A673 (cell line): ENCODE measurements at regions of chr7 and their contacts with region 1.

Region 1: DNA sequence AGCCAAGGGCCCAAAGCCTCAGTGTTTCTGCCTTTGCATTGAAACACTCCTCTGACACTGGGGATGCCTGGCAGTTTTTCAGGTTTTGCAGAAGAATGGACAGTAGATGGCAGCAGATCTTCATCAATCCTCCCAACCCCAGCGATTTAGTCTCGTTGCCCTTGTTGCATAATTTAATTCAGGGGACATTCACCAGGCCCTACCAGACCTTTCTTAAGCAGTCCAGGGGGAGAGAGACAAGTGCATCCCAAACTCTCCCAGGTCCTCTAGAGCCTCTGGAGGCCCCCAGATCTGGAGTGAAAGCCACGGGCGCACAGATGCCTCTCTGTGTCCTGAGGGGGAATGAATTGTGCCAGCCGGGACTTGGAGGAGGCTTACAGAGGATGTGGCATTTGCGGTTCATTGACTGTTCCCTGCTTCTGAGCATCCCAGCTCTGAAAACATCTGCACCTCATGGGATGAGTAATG is 29.6 kb downstream of the MINDY4 start:
- DNase-seq: peak; percentile 80
- H3K4me3 ChIP-seq: no peak overlapping the region
- H3K27ac ChIP-seq: no peak overlapping the region
- H3K4me1 ChIP-seq: peaks cover 18% of the 10 kb centered on the region
- H3K27me3 ChIP-seq: no peaks in the 10 kb centered on the region
- CTCF ChIP-seq: peak; percentile 71

Region 2: GRCh38 chr7:30977896-30978564 is 177.2 kb after region 1 on chr7:
- CTCF ChIA-PET with region 1: no interaction called
- POLR2A ChIA-PET with region 1: no interaction called
- intact Hi-C with region 1: loop called (anchors 1 kb)
- DNase-seq: no peak
- H3K4me3 ChIP-seq: no peak overlapping the region
- H3K27ac ChIP-seq: no peak overlapping the region
- H3K4me1 ChIP-seq: no peaks in the 10 kb centered on the region
- H3K27me3 ChIP-seq: peaks cover 5% of the 10 kb centered on the region
- CTCF ChIP-seq: peak; percentile 48